Heart right ventricle (tissue), 16 donors: ENCODE measurements at regions of chr18 and their contacts with region 1.

Region 1: DNA sequence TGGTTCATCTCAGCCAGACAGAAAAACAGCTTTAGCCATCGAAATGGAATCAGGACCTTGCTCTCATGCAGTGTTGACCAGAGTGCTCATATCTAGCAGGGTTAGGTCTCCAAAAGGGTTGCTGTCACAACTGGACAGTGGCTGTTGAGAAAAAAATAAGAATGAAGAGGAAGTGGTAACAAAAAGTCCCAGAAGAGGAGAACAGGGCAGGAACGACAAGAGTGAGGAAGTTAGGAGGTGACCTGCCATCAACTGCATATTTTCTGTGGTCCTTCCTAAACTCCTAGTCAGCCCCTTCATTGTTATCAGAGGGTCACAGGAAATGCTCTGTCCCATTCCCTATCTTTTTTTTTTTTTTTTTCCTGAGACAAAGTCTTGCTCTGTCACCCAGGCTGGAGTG is 188.1 kb upstream of the LINC00305 start:
- DNase-seq: no peak
- ATAC-seq: no peak
- H3K4me3 ChIP-seq: no peak overlapping the region
- H3K27ac ChIP-seq: no peak overlapping the region
- H3K4me1 ChIP-seq: peaks cover 0 to 17% (median 0%) of the 10 kb centered on the region in 9 donors
- H3K27me3 ChIP-seq: no peaks in the 10 kb centered on the region
- CTCF ChIP-seq: no peak

Region 2: GRCh38 chr18:64294967-64295366 is 42.1 kb before region 1 on chr18:
- intact Hi-C with region 1: loop called in 1 of 10 experiments (anchors 10 kb)
- DNase-seq: no peak
- ATAC-seq: no peak
- H3K4me3 ChIP-seq: no peak overlapping the region
- H3K27ac ChIP-seq: no peak overlapping the region
- H3K4me1 ChIP-seq: no peaks in the 10 kb centered on the region
- H3K27me3 ChIP-seq: no peaks in the 10 kb centered on the region
- CTCF ChIP-seq: no peak

Region 3: GRCh38 chr18:64645753-64646322 is 308.8 kb after region 1 on chr18:
- intact Hi-C with region 1: no loop called
- DNase-seq: no peak
- ATAC-seq: no peak
- H3K4me3 ChIP-seq: no peak overlapping the region
- H3K27ac ChIP-seq: no peak overlapping the region
- H3K4me1 ChIP-seq: no peaks in the 10 kb centered on the region
- H3K27me3 ChIP-seq: no peaks in the 10 kb centered on the region
- CTCF ChIP-seq: no peak